Activated CD4-positive, alpha-beta memory T cell treated with anti-CD3 and anti-CD28 coated beads, Interleukin-2, amount 10 ng/mL, durations not matched to agents 7 days and 5 days (primary cell): ENCODE measurements at regions of chr17 and their contacts with region 1.

Region 1: DNA sequence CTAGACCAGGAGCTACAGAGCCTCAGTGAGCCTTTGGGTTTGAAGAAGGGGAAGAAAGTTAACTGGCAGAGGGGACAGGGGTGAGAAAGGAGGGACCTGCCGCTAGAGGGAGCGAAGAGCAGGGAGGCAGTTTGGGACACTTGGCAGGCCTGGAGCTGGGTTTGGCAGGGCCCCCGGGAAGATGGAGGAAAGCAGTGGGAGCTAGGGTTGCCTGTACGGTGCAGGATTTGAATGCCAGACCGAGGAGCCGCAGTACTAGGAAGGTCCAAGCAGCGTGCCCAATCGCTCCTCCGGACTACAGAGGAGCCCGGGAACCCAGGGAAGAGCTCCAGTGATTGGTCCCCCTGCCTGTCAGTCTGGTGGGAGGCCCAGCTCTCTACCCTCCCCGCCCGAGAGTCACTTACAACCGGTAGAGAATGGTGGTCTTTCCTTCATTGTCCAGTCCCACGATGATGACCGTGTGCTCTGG is 1.3 kb downstream of the ARL5C start:
- DNase-seq: peak; percentile 77
- H3K4me3 Mint-ChIP-seq: peak overlapping the region; percentile 76
- H3K27ac Mint-ChIP-seq: no peak overlapping the region
- H3K4me1 Mint-ChIP-seq: peaks cover 32% of the 10 kb centered on the region
- H3K27me3 Mint-ChIP-seq: peaks cover 36% of the 10 kb centered on the region

Region 2: DNA sequence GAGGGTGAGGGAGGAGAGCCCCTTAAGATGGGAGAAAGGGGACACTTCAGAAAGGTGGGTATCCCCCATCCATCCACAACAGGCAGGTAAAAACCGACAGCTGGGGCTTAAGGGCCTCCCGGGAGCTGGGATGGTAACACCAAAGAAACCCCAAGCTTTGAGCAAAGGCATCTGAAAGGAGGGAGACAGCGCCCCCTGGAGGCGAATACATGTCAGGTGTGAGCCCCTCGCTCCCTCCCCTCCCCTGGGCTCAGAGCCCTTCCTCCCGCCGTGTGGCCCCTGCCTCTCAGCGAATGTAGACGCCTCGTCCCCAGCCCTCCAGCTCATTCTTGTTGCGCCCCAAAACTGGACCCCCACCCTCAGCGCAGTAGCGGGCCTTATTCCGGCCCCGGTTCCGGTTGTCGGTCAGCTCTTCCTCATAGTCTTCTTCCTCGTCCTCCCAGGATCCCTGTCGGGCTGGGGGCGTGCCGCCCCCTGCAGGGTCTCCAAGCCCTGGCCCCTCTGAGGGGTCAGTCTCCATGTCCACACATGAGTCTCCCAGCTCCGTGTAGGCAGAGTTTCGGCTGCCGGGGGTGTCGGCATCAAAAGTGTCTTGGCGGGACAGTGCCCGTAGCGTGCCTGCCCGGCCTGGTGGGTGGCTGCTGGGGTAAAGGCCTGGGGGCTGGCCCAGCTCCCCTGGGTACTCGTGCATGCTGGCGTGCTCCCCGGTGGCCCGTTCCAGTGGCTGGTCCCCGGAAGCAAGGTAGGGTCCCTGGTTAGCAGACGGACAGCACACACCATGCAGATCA is 10.4 kb after region 1 on chr17:
- CTCF ChIA-PET with region 1: interaction called, 92 read pairs
- POLR2A ChIA-PET with region 1: interaction called, 17 read pairs
- DNase-seq: peak; percentile 75
- H3K4me3 Mint-ChIP-seq: no peak overlapping the region
- H3K27ac Mint-ChIP-seq: no peak overlapping the region
- H3K4me1 Mint-ChIP-seq: peaks cover 8% of the 10 kb centered on the region
- H3K27me3 Mint-ChIP-seq: no peaks in the 10 kb centered on the region

Region 3: GRCh38 chr17:39199820-39200069 is 35.0 kb after region 1 on chr17:
- CTCF ChIA-PET with region 1: interaction called, 21 read pairs
- POLR2A ChIA-PET with region 1: interaction called, 12 read pairs
- DNase-seq: peak; percentile 89
- H3K4me3 Mint-ChIP-seq: peak overlapping the region; percentile 93
- H3K27ac Mint-ChIP-seq: peak overlapping the region; percentile 96
- H3K4me1 Mint-ChIP-seq: peaks cover 66% of the 10 kb centered on the region
- H3K27me3 Mint-ChIP-seq: no peaks in the 10 kb centered on the region

Region 4: DNA sequence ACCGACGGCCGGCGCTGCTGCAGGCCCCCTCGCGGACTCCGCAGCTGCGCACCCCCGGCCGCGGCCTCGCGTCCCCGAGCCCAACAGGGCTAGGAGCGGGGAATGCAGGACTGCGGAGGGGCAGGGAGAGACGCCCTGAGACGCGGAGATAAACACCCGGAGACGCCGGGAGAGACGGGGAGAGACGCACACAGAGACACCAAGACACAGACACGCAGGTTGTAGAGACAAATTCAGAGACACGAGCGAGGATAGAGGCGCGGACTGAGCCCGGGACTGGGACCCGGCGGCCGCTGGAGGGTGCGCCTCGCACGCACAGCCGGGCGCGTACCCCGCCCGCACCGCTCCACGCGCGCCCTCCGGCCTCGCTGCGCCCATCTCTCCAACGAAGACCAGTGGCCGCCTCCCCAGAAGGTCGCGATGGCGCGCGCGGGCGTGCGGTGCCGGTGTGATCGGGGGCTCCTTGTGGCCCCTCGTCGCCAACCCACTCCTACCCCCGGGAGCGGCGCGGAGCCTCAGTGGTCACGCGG is 60.1 kb after region 1 on chr17:
- CTCF ChIA-PET with region 1: no interaction called
- POLR2A ChIA-PET with region 1: no interaction called
- DNase-seq: no peak
- H3K4me3 Mint-ChIP-seq: no peak overlapping the region
- H3K27ac Mint-ChIP-seq: no peak overlapping the region
- H3K4me1 Mint-ChIP-seq: peaks cover 7% of the 10 kb centered on the region
- H3K27me3 Mint-ChIP-seq: peaks cover 46% of the 10 kb centered on the region

Region 5: GRCh38 chr17:39235555-39236449 is 71.1 kb after region 1 on chr17:
- CTCF ChIA-PET with region 1: interaction called, 15 read pairs
- POLR2A ChIA-PET with region 1: interaction called, 7 read pairs
- DNase-seq: peak; percentile 72
- H3K4me3 Mint-ChIP-seq: no peak overlapping the region
- H3K27ac Mint-ChIP-seq: no peak overlapping the region
- H3K4me1 Mint-ChIP-seq: peaks cover 28% of the 10 kb centered on the region
- H3K27me3 Mint-ChIP-seq: peaks cover 9% of the 10 kb centered on the region

Region 6: DNA sequence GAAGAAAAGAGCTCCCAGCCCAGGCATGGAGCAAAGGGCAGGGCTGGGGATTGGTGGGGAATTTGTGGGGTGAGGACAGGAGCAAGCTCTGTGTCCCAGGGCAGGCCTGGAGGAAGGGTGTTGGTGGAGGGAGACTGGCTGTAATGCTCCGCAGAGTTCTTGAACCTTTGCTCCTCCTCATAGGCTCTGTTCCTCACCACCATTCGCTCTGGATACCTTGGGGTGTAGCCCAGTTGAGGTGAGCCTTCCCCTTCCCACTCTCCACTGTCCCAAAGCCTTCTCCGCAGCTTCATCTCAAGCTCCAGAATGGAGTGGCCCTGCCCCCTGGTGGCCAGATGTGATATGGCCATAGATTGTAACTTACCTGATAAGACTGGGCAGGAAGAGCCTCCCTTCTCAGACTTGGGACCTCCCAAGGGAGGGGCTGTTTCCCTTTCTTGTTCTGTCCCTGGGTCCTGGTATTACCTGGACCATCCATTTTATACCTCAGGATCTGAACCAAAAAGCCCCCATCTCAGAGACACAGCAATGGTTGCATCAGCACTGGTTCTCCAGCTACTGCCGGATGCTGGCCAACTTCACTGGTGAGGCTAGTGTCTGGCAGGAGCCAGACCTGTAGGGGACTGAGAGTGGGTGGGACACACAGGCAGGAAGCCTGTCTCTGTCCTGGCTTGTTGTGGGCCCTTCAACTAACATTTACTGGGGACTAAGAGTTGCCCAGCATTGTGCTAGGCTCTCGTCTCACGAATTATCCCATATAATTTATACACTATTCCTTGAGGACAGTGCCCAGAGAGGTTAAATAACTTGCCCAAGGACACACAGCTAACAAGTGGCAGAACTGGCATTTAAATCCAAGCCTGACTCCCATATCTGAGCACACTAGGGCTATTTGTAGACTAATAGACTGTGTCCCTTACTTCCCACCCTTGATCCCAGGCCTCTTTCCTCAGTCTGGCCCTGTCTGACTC is 80.2 kb after region 1 on chr17:
- CTCF ChIA-PET with region 1: interaction called, 22 read pairs
- POLR2A ChIA-PET with region 1: interaction called, 3 read pairs
- DNase-seq: peak; percentile 89
- H3K4me3 Mint-ChIP-seq: no peak overlapping the region
- H3K27ac Mint-ChIP-seq: no peak overlapping the region
- H3K4me1 Mint-ChIP-seq: peaks cover 15% of the 10 kb centered on the region
- H3K27me3 Mint-ChIP-seq: no peaks in the 10 kb centered on the region

Region 7: DNA sequence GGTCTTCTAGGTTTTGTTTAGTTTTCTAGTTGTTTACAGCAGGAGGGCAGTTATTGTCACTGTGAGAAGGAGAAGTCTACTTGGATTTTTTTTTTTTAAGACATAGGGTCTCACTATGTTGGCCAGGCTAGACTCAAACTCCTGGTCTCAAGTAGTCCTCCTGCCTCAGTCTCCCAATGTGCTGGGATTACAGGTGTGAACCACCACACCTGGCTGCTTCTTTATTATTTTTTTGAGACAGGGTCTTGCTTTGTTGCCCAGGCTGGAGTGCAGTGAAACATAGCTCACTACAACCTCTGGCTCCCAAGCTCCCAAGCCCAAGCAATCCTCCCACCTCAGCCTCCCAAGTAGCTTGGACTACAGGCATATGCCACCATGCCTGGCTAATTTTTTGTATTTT is 129.4 kb after region 1 on chr17:
- CTCF ChIA-PET with region 1: no interaction called
- POLR2A ChIA-PET with region 1: no interaction called
- DNase-seq: no peak
- H3K4me3 Mint-ChIP-seq: no peak overlapping the region
- H3K27ac Mint-ChIP-seq: no peak overlapping the region
- H3K4me1 Mint-ChIP-seq: no peaks in the 10 kb centered on the region
- H3K27me3 Mint-ChIP-seq: no peaks in the 10 kb centered on the region